CD4-positive, alpha-beta memory T cell (primary cell): ENCODE measurements at regions of chr1 and their contacts with region 1.

Region 1: GRCh38 chr1:110203021-110203661 is 7.0 kb upstream of the KCNC4 start:
- DNase-seq: peak; percentile 75 to 82 (median 78)
- H3K4me3 ChIP-seq: no peak overlapping the region
- H3K4me3 Mint-ChIP-seq: peak overlapping the region in 3 of 8 donors; percentile 2 to 44 (median 34)
- H3K27ac ChIP-seq: no peak overlapping the region
- H3K27ac Mint-ChIP-seq: peak overlapping the region; percentile 48 to 93 (median 83)
- H3K4me1 ChIP-seq: peaks cover 19% of the 10 kb centered on the region
- H3K4me1 Mint-ChIP-seq: peaks cover 13 to 31% (median 20%) of the 10 kb centered on the region in 4 donors
- H3K27me3 ChIP-seq: no peaks in the 10 kb centered on the region
- H3K27me3 Mint-ChIP-seq: no peaks in the 10 kb centered on the region

Region 2: GRCh38 chr1:110019770-110020169 is 183.4 kb before region 1 on chr1:
- CTCF ChIA-PET with region 1: no interaction called
- POLR2A ChIA-PET with region 1: no interaction called
- intact Hi-C with region 1: no loop called
- DNase-seq: no peak
- H3K4me3 ChIP-seq: no peak overlapping the region
- H3K4me3 Mint-ChIP-seq: no peak overlapping the region
- H3K27ac ChIP-seq: no peak overlapping the region
- H3K27ac Mint-ChIP-seq: peak overlapping the region in 2 of 7 donors; percentile 11 to 61
- H3K4me1 ChIP-seq: no peaks in the 10 kb centered on the region
- H3K4me1 Mint-ChIP-seq: no peaks in the 10 kb centered on the region
- H3K27me3 ChIP-seq: no peaks in the 10 kb centered on the region
- H3K27me3 Mint-ChIP-seq: no peaks in the 10 kb centered on the region

Region 3: DNA sequence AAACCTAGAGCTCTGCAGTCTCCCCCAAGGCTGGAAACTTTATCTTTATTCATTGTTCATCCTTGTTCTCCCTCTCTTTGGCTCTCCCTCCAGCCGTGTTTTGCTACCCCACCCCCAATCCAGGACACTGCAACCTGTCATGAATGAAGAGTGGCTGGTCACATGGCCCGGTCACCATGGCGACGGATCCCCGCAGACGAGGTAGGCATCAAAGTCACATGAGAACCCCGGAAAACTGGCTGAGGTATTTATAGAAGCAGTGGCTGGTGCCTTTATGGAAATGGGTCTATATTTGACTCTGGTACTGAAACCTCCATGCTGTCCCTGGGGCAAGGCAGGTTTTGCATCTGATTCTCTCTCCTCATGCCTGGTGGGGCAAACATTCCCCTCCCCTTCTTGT is 66.2 kb before region 1 on chr1:
- CTCF ChIA-PET with region 1: no interaction called
- POLR2A ChIA-PET with region 1: no interaction called
- intact Hi-C with region 1: no loop called
- DNase-seq: peak; percentile 12 to 49 (median 22)
- H3K4me3 ChIP-seq: no peak overlapping the region
- H3K4me3 Mint-ChIP-seq: no peak overlapping the region
- H3K27ac ChIP-seq: no peak overlapping the region
- H3K27ac Mint-ChIP-seq: no peak overlapping the region
- H3K4me1 ChIP-seq: peaks cover 5% of the 10 kb centered on the region
- H3K4me1 Mint-ChIP-seq: peaks cover 8 to 14% (median 10%) of the 10 kb centered on the region in 4 donors
- H3K27me3 ChIP-seq: no peaks in the 10 kb centered on the region
- H3K27me3 Mint-ChIP-seq: peaks cover 39 to 48% of the 10 kb centered on the region in 2 donors

Region 4: DNA sequence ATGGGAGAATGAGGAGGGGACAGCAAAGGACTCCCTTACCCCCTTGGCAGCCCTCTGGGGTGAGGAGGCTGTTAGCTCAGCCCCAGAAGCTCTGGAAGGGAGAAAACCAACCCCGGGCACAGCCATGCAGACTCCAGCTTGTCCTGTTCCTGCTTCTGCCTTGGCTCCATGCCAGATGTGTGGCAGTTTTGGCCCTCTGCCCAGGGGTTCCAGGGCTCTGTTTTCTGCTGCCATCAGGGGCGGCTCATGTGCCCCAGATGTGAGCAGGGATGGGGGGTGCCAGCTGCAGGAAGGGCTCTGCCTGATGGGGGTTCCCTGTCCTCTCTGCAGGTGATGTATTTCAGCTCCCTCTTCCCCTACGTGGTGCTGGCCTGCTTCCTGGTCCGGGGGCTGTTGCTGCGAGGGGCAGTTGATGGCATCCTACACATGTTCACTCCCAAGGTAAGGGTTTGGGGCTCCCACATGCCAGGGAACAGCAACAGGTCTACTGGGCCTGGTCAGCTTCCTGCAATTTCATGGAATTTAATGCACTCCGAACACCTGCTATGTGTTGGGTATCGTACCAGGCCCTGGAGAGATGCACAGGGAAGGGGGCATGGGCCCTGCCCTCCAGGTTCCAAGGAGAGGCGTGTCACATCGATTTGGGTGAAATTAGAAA is 26.7 kb before region 1 on chr1:
- CTCF ChIA-PET with region 1: no interaction called
- POLR2A ChIA-PET with region 1: no interaction called
- intact Hi-C with region 1: no loop called
- DNase-seq: no peak
- H3K4me3 ChIP-seq: no peak overlapping the region
- H3K4me3 Mint-ChIP-seq: no peak overlapping the region
- H3K27ac ChIP-seq: no peak overlapping the region
- H3K27ac Mint-ChIP-seq: no peak overlapping the region
- H3K4me1 ChIP-seq: no peaks in the 10 kb centered on the region
- H3K4me1 Mint-ChIP-seq: no peaks in the 10 kb centered on the region
- H3K27me3 ChIP-seq: no peaks in the 10 kb centered on the region
- H3K27me3 Mint-ChIP-seq: peaks cover 3 to 23% of the 10 kb centered on the region in 2 donors

Region 5: DNA sequence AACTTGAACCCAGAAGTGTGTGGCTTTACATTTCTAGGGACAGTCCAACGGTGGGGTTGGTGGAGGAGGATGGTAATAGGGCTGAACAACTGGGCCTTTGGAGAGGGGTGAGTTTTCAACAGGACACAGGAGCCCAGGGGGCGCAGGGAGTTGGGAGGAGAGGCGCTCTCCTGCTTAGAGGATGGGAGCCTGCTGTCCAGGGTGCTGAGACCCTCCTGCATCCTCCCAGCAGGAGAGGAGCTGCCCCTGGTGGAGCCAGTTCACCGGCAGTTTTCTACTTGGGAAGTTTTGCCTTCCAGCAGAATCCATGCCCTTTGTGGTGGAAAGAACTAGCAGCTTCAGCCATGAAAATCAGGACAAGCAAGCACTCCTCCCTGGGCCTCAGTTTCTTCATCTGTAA is 15.6 kb after region 1 on chr1:
- CTCF ChIA-PET with region 1: interaction called, 10 read pairs
- POLR2A ChIA-PET with region 1: no interaction called
- intact Hi-C with region 1: no loop called
- DNase-seq: peak in 1 of 5 donors; percentile 2
- H3K4me3 ChIP-seq: no peak overlapping the region
- H3K4me3 Mint-ChIP-seq: no peak overlapping the region
- H3K27ac ChIP-seq: no peak overlapping the region
- H3K27ac Mint-ChIP-seq: no peak overlapping the region
- H3K4me1 ChIP-seq: peaks cover under 1% of the 10 kb centered on the region
- H3K4me1 Mint-ChIP-seq: peaks cover 10 to 21% (median 12%) of the 10 kb centered on the region in 4 donors
- H3K27me3 ChIP-seq: no peaks in the 10 kb centered on the region
- H3K27me3 Mint-ChIP-seq: no peaks in the 10 kb centered on the region

Region 6: DNA sequence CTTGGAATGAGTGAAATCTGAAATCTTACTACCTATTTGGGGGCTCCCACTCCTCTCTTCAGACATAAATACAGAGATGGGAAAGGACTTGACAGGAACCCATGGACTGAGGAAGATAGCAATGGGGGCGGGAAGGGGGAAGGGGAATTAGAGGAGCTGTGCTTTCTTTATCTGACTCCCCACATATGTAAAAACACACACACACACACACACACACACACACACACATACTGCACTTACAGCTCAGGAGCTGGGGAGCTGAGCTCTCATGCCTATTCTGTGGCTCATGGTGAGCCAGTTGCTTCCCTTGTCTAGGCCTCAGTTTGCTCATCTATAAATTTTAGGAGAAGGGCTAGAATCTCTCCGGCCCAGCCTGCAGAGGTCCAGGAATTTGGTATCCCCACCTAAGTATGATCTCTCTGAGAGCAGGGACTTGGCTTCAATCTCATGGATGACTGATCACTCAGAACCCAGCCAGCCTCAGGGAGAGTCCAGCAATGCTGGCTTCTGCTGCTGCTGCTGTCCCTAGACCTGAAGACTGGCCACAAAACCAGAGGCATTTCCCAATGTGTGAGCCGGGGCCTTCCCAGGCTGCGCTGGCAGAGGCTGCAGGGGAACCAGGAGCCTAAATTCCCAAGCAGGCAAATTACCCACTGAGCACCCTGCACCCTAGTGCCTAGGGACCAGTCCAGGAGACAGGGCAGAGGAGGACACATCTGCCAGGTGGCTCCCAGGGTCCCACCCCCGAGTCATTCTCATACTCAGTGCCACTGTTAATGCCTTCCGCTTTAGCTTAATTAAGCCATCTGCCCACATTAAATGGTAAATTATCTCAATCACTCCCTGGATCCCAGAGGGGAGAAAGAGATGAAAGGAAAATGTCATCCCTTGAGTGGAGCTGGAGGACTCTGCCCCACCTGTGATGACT is 78.5 kb after region 1 on chr1:
- CTCF ChIA-PET with region 1: no interaction called
- POLR2A ChIA-PET with region 1: no interaction called
- intact Hi-C with region 1: no loop called
- DNase-seq: no peak
- H3K4me3 ChIP-seq: no peak overlapping the region
- H3K4me3 Mint-ChIP-seq: no peak overlapping the region
- H3K27ac ChIP-seq: no peak overlapping the region
- H3K27ac Mint-ChIP-seq: no peak overlapping the region
- H3K4me1 ChIP-seq: no peaks in the 10 kb centered on the region
- H3K4me1 Mint-ChIP-seq: no peaks in the 10 kb centered on the region
- H3K27me3 ChIP-seq: no peaks in the 10 kb centered on the region
- H3K27me3 Mint-ChIP-seq: peaks cover 4 to 5% of the 10 kb centered on the region in 2 donors

Region 7: GRCh38 chr1:110312188-110313121 is 109.3 kb after region 1 on chr1:
- CTCF ChIA-PET with region 1: interaction called, 724 read pairs
- POLR2A ChIA-PET with region 1: interaction called, 44 read pairs
- intact Hi-C with region 1: loop called (anchors 1 kb)
- DNase-seq: peak; percentile 67 to 73 (median 70)
- H3K4me3 ChIP-seq: no peak overlapping the region
- H3K4me3 Mint-ChIP-seq: peak overlapping the region in 2 of 8 donors; percentile 32 to 57
- H3K27ac ChIP-seq: no peak overlapping the region
- H3K27ac Mint-ChIP-seq: peak overlapping the region in 2 of 7 donors; percentile 17 to 59
- H3K4me1 ChIP-seq: no peaks in the 10 kb centered on the region
- H3K4me1 Mint-ChIP-seq: peaks cover 0 to 2% (median under 1%) of the 10 kb centered on the region in 4 donors
- H3K27me3 ChIP-seq: no peaks in the 10 kb centered on the region
- H3K27me3 Mint-ChIP-seq: no peaks in the 10 kb centered on the region

Region 8: GRCh38 chr1:110407260-110408210 is 204.4 kb after region 1 on chr1 and contains the start of gene LAMTOR5:
- CTCF ChIA-PET with region 1: interaction called, 45 read pairs
- POLR2A ChIA-PET with region 1: interaction called, 10 read pairs
- intact Hi-C with region 1: loop called (anchors 2 kb)
- DNase-seq: peak; percentile 89 to 91 (median 90)
- H3K4me3 ChIP-seq: peak within 1 kb of the TSS; percentile 83 to 98
- H3K4me3 Mint-ChIP-seq: peak within 1 kb of the TSS; percentile 96 to 100 (median 99)
- H3K27ac ChIP-seq: peak within 1 kb of the TSS; percentile 87
- H3K27ac Mint-ChIP-seq: peak within 1 kb of the TSS; percentile 95 to 100 (median 99)
- H3K4me1 ChIP-seq: peaks cover 28% of the 10 kb centered on the region
- H3K4me1 Mint-ChIP-seq: peaks cover 17 to 34% (median 24%) of the 10 kb centered on the region in 4 donors
- H3K27me3 ChIP-seq: no peaks in the 10 kb centered on the region
- H3K27me3 Mint-ChIP-seq: no peaks in the 10 kb centered on the region
- total RNA-seq, gene LAMTOR5: 64.5 to 69.6 TPM

Region 9: DNA sequence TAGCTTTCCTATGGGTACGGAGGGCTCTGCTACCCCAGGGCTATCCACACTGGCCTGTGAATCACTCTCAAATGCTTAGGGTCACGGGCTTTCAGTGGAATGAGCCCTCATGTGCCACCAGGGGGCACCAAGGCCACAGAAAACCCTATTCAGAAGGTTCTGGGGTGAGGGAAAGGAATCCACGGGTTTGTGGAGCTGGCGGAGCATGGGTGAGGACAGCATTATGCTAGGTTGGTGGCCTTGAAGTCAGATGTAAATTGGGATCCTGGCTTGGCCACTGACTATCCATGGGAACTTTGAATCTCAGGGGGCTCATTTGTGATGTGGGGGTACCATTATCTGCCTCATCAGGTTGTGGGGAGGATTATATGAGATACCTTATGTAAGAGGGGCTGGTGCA is 209.4 kb after region 1 on chr1:
- CTCF ChIA-PET with region 1: interaction called, 45 read pairs
- POLR2A ChIA-PET with region 1: interaction called, 10 read pairs
- intact Hi-C with region 1: loop called (anchors 2 kb)
- DNase-seq: peak; percentile 52 to 63 (median 56)
- H3K4me3 ChIP-seq: no peak overlapping the region
- H3K4me3 Mint-ChIP-seq: no peak overlapping the region
- H3K27ac ChIP-seq: no peak overlapping the region
- H3K27ac Mint-ChIP-seq: peak overlapping the region in 4 of 7 donors; percentile 5 to 84 (median 49)
- H3K4me1 ChIP-seq: peaks cover 15% of the 10 kb centered on the region
- H3K4me1 Mint-ChIP-seq: peaks cover 10 to 19% (median 13%) of the 10 kb centered on the region in 4 donors
- H3K27me3 ChIP-seq: no peaks in the 10 kb centered on the region
- H3K27me3 Mint-ChIP-seq: no peaks in the 10 kb centered on the region

Region 10: GRCh38 chr1:110455151-110455550 is 252.0 kb after region 1 on chr1:
- CTCF ChIA-PET with region 1: interaction called, 234 read pairs
- POLR2A ChIA-PET with region 1: interaction called, 14 read pairs
- intact Hi-C with region 1: loop called (anchors 1 kb)
- DNase-seq: no peak
- H3K4me3 ChIP-seq: no peak overlapping the region
- H3K4me3 Mint-ChIP-seq: no peak overlapping the region
- H3K27ac ChIP-seq: no peak overlapping the region
- H3K27ac Mint-ChIP-seq: no peak overlapping the region
- H3K4me1 ChIP-seq: no peaks in the 10 kb centered on the region
- H3K4me1 Mint-ChIP-seq: no peaks in the 10 kb centered on the region
- H3K27me3 ChIP-seq: no peaks in the 10 kb centered on the region
- H3K27me3 Mint-ChIP-seq: peaks cover 6 to 10% of the 10 kb centered on the region in 2 donors